Psoas muscle (tissue), 8 donors: ENCODE measurements at regions of chr18 and their contacts with region 1.

Region 1: GRCh38 chr18:27599202-27599829 is 414.2 kb upstream of the CHST9 start:
- DNase-seq: peak; percentile 24 to 60
- ATAC-seq: peak; percentile 47 to 72 (median 62)
- H3K4me3 ChIP-seq: no peak overlapping the region
- H3K27ac ChIP-seq: no peak overlapping the region
- H3K4me1 ChIP-seq: peaks cover 5% of the 10 kb centered on the region
- H3K27me3 ChIP-seq: no peaks in the 10 kb centered on the region
- CTCF ChIP-seq: peak; percentile 83

Region 2: DNA sequence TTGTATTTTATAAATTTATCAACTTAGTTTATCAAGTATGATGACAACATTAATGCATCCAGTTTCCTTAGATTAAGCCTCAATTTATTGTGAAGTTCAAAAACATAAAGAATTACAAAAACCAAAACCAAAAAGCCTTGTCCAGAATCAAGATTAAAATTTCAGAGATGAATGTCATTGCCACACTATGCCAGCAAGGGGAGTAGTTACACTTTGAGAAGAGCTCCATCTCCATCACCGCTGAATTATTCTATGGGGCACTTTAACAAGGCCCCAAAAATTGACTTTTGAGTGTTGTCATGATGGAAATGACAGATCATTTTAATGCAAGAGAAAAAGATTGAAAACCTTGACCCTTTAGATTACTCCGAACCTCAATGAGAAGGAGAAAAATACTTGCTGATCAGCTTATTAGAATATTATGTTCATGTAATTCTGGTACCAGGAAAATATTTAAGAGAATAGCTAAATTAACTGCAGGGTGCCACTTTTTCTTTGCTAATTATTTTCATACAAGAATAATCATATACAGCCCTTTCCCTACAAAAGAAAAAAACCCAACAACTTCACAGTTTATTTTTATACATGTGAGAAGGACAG is 581.3 kb before region 1 on chr18:
- intact Hi-C with region 1: loop called in 1 of 2 experiments (anchors 5 kb)
- DNase-seq: no peak
- ATAC-seq: peak in 2 of 4 donors; percentile 39 to 70
- H3K4me3 ChIP-seq: no peak overlapping the region
- H3K27ac ChIP-seq: no peak overlapping the region
- H3K4me1 ChIP-seq: no peaks in the 10 kb centered on the region
- H3K27me3 ChIP-seq: no peaks in the 10 kb centered on the region
- CTCF ChIP-seq: peak; percentile 59

Region 3: GRCh38 chr18:27363872-27364271 is 235.4 kb before region 1 on chr18:
- intact Hi-C with region 1: loop called (anchors 2 kb)
- DNase-seq: no peak
- ATAC-seq: peak in 2 of 4 donors; percentile 58 to 66
- H3K4me3 ChIP-seq: no peak overlapping the region
- H3K27ac ChIP-seq: no peak overlapping the region
- H3K4me1 ChIP-seq: no peaks in the 10 kb centered on the region
- H3K27me3 ChIP-seq: no peaks in the 10 kb centered on the region
- CTCF ChIP-seq: peak; percentile 55

Region 4: DNA sequence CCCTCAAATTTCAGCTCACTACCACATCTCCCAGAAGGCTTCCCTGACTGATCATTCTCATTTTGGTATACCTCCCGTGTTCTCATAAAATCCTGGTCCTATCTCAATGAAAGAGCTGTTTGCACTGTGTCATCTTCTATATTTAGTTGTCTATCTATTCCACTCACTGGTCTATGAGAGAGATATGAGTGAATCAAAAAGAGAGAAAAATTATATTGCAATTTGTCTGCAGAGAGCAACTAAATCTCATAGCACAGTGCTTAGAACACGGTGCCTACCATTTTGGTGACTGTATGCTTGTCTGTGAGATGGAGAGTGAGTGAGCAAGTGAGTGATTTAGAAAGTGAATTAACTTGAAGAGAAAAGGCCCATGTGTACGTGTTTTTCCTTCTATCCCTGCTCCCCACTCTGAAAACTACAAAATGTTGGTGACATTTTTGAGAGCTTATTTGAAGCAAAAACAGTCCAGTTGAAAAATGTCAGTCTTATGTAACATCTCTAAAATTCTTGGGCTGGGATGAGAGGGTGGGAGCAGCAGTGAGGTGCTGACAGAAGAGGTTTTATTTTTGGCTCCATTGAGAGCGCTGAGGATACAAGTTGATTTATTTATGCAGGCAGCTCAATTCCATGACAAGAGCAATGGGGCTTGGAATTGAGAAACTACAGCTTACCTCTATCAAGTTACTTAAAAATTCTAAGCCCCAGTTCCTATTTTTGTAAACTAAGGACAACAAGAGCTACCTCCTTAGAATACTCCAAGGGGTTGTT is 40.7 kb before region 1 on chr18:
- intact Hi-C with region 1: loop called in 1 of 2 experiments (anchors 5 kb)
- DNase-seq: no peak
- ATAC-seq: peak; percentile 81 to 93 (median 90)
- H3K4me3 ChIP-seq: peak overlapping the region; percentile 38
- H3K27ac ChIP-seq: peak overlapping the region; percentile 86
- H3K4me1 ChIP-seq: peaks cover 23% of the 10 kb centered on the region
- H3K27me3 ChIP-seq: no peaks in the 10 kb centered on the region
- CTCF ChIP-seq: no peak